ENCODE measurements at regions of chr17 and their contacts with region 1.

Region 1: GRCh38 chr17:35460354-35460851 is 11.8 kb upstream of the SLFN13 start:
- DNase-seq: no peak
- H3K4me3 ChIP-seq: peak overlapping the region; percentile 9 to 59 (median 36)
- H3K27ac ChIP-seq: peak overlapping the region in 2 of 4 donors; percentile 10 to 23
- H3K4me1 ChIP-seq: peaks cover 0 to 10% (median 0%) of the 10 kb centered on the region in 3 donors
- H3K27me3 ChIP-seq: peaks cover 0 to 58% (median 0%) of the 10 kb centered on the region in 4 donors
- CTCF ChIP-seq: no peak
- POLR2A ChIP-seq: peak in 1 of 4 donors; percentile 40

Region 2: GRCh38 chr17:35404360-35404759 is 56.0 kb before region 1 on chr17:
- intact Hi-C with region 1: loop called (anchors 10 kb)
- DNase-seq: no peak
- H3K4me3 ChIP-seq: no peak overlapping the region
- H3K27ac ChIP-seq: no peak overlapping the region
- H3K4me1 ChIP-seq: no peaks in the 10 kb centered on the region
- H3K27me3 ChIP-seq: no peaks in the 10 kb centered on the region
- CTCF ChIP-seq: no peak
- POLR2A ChIP-seq: no peak

Region 3: DNA sequence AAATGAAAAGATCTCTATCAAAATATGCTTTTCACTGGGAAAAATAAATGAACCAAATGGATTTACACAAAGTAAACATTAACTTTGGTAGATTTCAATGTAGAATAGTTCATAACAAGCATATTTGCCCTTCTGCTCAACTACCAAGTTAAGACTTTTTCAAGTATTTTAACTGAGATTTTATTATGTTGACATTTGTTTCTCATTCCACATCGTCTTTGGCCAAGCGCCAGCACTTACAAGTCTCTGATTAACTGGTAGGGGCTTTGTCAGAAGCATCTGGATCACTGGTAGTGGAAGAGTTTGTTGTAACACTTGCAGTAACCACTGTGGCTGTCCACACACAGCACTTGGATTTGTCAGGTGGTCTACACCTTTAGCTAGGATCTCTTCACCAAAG is 54.2 kb after region 1 on chr17:
- intact Hi-C with region 1: no loop called
- DNase-seq: no peak
- H3K4me3 ChIP-seq: no peak overlapping the region
- H3K27ac ChIP-seq: no peak overlapping the region
- H3K4me1 ChIP-seq: peaks cover 0 to 8% (median 0%) of the 10 kb centered on the region in 3 donors
- H3K27me3 ChIP-seq: peaks cover 0 to 50% (median 0%) of the 10 kb centered on the region in 4 donors
- CTCF ChIP-seq: no peak
- POLR2A ChIP-seq: no peak